ENCODE measurements at regions of chr21 and their contacts with region 1.

Region 1: GRCh38 chr21:44338971-44339910 is at the start of gene CFAP410:
- DNase-seq: peak; percentile 93 to 97 (median 94)
- ATAC-seq: peak; percentile 87
- H3K4me3 Mint-ChIP-seq: peak within 1 kb of the TSS; percentile 85 to 98 (median 90)
- H3K27ac Mint-ChIP-seq: peak within 1 kb of the TSS; percentile 94 to 99 (median 97)
- H3K4me1 Mint-ChIP-seq: peaks cover 11 to 31% (median 25%) of the 10 kb centered on the region in 4 donors
- H3K27me3 Mint-ChIP-seq: no peaks in the 10 kb centered on the region
- polyA plus RNA-seq, gene CFAP410: 23.2 to 40.6 (median 29.1) TPM

Region 2: DNA sequence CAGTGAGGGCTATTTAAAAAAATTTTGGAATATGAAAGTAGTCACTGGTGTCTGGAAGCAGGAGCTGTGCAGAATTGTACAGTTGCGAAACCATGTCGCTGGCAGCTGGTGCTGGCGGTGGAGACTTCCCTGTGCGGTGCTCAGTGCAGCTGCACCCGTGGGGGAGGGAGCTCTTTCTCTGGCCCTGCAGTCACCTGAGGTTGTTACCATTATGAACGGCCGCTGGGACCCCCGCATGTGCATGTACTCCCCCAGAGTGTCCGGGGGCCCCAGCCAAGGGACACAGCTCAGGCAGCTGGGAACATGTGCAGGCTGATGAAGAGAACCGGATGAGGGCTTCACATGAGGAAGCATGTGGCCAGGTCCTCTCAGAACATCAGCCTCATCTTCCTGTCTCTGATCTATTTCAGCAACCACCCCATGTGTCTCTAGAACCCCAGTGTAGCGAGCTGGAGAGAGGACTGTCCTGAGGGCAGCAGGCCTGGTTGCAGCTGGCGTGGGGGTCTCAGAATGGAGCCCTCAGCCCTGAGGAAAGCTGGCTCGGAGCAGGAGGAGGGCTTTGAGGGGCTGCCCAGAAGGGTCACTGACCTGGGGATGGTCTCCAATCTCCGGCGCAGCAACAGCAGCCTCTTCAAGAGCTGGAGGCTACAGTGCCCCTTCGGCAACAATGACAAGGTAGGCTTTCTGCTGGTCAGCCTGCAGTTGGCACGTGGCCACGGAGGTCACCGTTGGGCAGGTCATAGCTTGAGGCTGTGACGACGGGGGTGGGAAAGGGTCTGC is 14.1 kb after region 1 on chr21 and contains the start of gene TRPM2:
- POLR2A ChIA-PET with region 1: interaction called, 26 read pairs
- DNase-seq: peak in 8 of 10 donors; percentile 15 to 64 (median 44)
- ATAC-seq: peak; percentile 90 to 91
- H3K4me3 Mint-ChIP-seq: peak within 1 kb of the TSS; percentile 69 to 92 (median 83)
- H3K27ac Mint-ChIP-seq: peak within 1 kb of the TSS; percentile 20 to 86 (median 76)
- H3K4me1 Mint-ChIP-seq: peaks cover 23 to 56% (median 50%) of the 10 kb centered on the region in 4 donors
- H3K27me3 Mint-ChIP-seq: peaks cover 0 to 15% (median 0%) of the 10 kb centered on the region in 5 donors
- polyA plus RNA-seq, gene TRPM2: 0.20 to 1.2 (median 0.37) TPM

Measured in naive thymus-derived CD8-positive, alpha-beta T cell (primary cell).